SK-N-SH (cell line): ENCODE measurements at regions of chr5 and their contacts with region 1.

Region 1: GRCh38 chr5:155943516-155944407 is 383.2 kb upstream of the SGCD start:
- DNase-seq: peak; percentile 52
- H3K4me3 ChIP-seq: peak overlapping the region in 1 of 2 experiments; percentile 36; a peak in 1 of 4 replicates
- H3K27ac ChIP-seq: no peak overlapping the region
- H3K4me1 ChIP-seq: no peaks in the 10 kb centered on the region
- H3K27me3 ChIP-seq: no peaks in the 10 kb centered on the region
- CTCF ChIP-seq: peak; percentile 81
- EP300 ChIP-seq: no peak
- RAD21 ChIP-seq: peak; percentile 88

Region 2: DNA sequence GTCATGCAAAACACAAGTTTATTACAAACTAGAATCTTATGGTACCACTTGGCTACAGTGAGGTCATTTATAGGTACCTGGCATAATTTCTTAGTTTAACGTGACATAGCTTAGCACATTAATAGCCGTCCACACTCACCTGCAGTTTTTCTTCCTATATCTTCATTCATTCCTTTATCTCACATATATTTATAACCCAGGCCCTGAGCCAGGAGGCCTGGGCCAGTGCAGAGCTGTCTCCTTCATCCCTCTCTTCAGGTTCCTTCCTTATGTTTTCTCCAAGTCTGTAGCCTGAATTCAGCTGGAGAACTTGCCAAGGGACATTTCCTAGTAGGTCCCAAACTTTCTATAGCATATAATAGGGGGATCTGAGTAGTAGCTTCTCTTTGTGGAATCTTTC is 15.3 kb after region 1 on chr5:
- CTCF ChIA-PET with region 1: interaction called, 16 read pairs
- POLR2A ChIA-PET with region 1: no interaction called
- DNase-seq: no peak
- H3K4me3 ChIP-seq: no peak overlapping the region
- H3K27ac ChIP-seq: no peak overlapping the region
- H3K4me1 ChIP-seq: no peaks in the 10 kb centered on the region
- H3K27me3 ChIP-seq: no peaks in the 10 kb centered on the region
- CTCF ChIP-seq: no peak
- EP300 ChIP-seq: no peak
- RAD21 ChIP-seq: no peak

Region 3: DNA sequence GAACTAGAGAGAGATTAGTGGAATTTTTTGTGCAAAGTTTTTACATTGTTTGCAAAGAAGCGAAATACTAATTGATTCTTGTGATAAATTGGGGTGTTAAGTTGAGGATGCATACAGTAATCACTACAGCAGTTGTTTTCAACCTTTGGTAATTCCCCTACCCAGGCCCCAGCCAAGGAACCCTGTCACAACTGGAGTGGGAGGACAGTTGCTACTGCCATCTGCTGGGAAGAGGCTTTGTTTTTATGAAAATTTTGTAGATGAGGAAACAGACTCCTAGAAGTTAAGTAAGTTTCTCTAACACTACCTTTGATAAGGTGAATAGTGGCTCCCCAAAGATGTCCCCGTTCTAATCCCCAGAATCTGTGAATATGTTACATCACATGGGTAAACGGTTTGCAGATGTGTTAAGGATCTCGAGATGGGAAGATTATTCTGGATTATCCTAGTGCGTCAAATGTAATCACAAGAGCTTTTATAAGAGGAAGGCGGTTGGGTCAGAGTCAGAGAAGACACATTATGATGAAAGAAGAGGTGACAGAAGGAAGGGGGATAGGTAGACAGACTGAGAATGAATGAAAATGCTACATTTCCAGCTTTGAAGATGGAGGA is 872.3 kb after region 1 on chr5:
- CTCF ChIA-PET with region 1: interaction called, 40 read pairs
- POLR2A ChIA-PET with region 1: no interaction called
- DNase-seq: peak; percentile 53
- H3K4me3 ChIP-seq: no peak overlapping the region; a peak in 1 of 4 replicates
- H3K27ac ChIP-seq: no peak overlapping the region
- H3K4me1 ChIP-seq: no peaks in the 10 kb centered on the region
- H3K27me3 ChIP-seq: no peaks in the 10 kb centered on the region
- CTCF ChIP-seq: peak; percentile 51
- EP300 ChIP-seq: no peak
- RAD21 ChIP-seq: peak; percentile 77

Region 4: DNA sequence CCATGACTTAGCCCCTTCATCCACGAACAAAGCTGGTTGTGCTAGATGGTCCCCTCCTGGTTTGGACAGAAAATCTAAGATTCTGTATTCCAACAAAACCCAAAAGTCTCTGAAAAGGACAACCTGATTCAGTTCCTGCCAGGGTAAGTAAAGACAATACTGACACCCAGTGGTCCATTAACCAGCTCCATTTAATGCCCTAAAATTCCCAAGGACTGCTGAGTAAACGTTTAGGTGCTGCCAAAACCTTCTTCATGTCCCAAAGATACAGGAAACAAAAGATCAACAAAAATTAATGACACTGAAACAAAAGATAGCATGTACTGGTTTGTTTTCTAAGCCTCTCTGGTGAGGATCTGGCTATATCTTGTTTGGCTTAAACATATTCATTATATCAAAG is 881.0 kb after region 1 on chr5:
- CTCF ChIA-PET with region 1: interaction called, 14 read pairs
- POLR2A ChIA-PET with region 1: no interaction called
- DNase-seq: peak; percentile 23
- H3K4me3 ChIP-seq: no peak overlapping the region; a peak in 1 of 4 replicates
- H3K27ac ChIP-seq: no peak overlapping the region
- H3K4me1 ChIP-seq: no peaks in the 10 kb centered on the region
- H3K27me3 ChIP-seq: no peaks in the 10 kb centered on the region
- CTCF ChIP-seq: peak; percentile 45
- EP300 ChIP-seq: no peak
- RAD21 ChIP-seq: peak; percentile 69